ENCODE measurements at regions of chr9 and their contacts with region 1.

Region 1: DNA sequence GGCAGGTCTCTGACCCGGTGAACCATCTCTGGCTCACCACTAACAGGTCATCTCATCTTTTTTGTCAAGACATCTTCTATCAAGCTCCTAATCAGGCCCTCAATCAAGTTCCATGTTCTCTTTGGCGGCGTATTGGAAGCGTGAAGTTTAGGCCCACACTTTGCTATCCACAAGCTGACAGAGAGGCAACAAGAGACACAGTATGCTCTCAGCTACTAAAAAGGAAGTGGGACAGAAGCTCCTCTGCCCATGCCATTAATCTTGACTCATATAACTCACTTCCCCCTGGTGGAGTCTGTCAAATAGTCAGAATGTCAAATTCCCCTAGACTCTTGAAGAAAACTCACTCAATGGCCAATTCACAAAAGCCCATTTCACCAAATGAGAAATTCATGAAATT is 77.6 kb upstream of the TMC1 start:
- DNase-seq: peak; percentile 75
- CTCF ChIP-seq: peak; percentile 5

Region 2: DNA sequence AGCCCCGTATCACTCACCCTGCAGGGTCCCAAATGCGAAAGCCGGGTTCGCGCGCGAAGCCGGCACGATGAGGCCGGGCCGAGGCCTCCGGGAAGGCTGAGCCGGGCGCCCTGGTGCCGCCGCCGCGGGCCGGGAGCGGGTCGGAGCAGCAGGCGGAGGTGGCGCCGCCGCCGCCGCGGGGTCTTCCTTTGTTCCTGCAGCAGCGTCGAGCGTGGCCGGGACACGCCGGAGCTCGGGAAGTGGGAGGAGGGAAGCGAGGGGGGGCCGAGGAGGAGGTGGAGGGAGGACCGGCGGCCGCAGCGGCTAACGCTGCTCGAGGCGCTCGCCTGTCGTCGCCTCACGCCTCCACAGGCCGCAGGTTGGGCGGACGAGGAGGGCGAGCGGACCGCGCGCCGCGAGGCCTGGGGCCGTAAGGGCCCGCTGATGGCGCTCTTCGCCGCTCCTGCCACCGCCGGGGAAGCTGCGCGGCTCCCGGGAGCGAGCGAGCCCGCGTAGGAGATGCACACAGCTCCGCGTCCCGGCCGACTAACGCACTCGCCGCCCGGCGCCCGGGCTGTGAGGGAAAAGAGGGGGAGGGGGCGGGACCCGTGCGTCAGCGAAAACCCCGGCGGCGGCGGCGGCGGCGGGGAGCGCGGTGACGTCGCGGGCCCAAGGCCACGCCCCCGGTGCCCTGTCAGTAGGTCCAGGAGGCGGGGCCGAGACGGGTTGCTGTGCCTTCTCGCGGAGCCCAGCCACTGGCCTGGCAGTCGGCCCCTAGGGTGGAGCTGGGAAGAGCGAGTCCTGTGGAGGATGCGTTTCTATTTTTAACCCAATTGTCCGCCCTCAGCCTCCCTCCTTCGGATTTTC is 79.0 kb before region 1 on chr9 and contains the start of gene ZFAND5:
- in situ Hi-C with region 1: loop called (anchors 10 kb)
- DNase-seq: peak; percentile 98
- CTCF ChIP-seq: peak; percentile 9

Measured in GM13977 (cell line).